ENCODE measurements at regions of chr3 and their contacts with region 1.

Region 1: DNA sequence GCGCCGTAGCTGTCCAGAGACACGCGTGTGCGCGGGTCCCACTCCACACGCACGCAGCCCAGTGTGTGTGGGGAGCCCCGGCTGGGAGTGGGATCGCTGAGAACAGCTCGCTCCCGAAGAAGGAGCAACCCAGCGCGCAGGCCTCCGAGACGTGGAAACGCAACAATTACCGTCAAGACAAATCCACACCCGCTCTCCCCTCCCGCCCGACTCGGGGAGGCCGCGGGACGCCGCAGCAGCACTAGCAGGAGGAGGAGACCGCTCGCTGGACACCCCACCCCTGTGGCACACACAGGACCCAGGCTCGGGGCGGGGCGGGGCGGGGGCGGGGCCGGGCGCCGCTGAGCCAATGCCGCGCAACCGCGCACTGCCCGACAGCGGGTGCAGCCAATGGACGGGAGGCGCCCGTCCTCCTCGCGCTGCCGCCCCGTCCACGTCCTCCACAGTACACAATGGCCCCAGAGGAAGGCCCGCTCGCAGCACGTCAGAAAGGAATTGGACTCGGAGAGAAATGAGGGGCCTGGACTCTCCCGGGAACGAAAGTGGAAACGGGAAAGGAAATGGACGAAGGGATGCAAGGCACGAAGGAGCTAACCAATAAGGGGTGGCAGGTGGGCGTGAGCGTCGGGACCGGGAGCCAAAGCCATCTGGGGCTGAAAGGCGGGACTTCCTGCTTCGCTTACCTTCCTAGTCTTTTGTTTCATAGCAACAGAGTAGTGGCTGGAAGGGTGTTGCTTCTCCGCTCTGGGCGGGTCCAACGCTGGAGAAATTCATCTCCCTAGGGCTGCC is at the start of gene CBLB:
- DNase-seq: peak; percentile 97
- ATAC-seq: peak; percentile 95
- total RNA-seq, gene CBLB: 54.6 TPM

Region 2: DNA sequence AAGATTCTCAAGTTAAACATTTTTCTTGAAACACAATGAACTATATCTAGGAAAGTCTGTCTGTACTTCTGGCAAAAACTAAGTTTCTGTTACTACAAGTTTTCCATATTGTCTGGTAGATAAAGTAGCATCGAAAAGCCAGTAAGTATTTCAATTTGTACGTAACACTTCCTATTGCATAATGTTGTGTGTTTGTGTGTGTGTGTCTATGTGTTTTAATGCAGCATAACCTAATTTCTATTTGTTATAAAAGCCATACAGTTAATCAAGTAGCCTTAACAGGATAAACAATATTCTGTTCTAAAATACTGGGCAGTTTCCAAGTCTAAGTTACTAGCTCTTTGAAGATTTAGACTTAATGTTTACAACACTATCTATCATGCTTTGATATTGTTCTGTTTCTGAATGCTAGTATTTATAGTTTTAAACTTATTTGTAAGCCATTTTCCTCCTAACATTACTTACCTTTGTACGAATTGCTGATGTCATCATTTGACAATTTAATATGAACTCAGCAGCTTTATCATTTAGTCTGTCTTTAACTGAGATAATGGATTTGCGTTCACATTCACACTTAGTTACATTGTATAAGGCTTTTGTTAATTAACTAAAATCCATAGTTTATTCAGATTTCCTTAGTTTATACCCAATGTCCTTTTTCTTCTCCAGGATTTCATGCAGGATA is 164.1 kb before region 1 on chr3:
- intact Hi-C with region 1: loop called (anchors 5 kb)
- DNase-seq: no peak
- ATAC-seq: no peak

Region 3: DNA sequence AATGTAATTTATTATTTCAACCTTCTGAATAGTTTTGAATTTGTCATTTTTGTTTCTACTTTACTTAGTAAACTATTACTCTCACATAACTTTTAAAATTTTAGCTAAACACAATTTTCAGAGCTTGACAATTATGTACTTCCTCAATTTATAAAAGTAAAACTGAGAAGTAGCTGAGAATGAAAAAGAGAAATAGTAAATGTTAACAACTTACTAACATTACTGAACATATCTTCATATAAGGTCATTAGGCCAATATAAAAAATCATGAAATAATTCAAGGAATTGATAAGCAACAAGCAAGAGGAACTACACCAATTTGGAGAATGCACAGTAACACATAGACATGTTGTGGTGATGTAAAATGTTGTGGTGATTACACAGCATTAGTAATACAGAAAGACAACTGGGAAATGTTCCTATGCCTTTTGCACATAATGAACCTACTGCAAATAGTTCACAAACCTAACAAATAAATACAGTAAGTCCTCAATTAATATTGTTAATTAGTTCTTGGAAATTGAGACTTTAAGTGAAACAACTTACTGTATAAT is 138.1 kb before region 1 on chr3:
- intact Hi-C with region 1: no loop called
- DNase-seq: no peak
- ATAC-seq: no peak

Region 4: GRCh38 chr3:105829871-105830622 is 38.9 kb before region 1 on chr3:
- intact Hi-C with region 1: loop called (anchors 5 kb)
- DNase-seq: no peak
- ATAC-seq: no peak

Region 5: GRCh38 chr3:105915524-105915923 is 46.6 kb after region 1 on chr3:
- intact Hi-C with region 1: no loop called
- DNase-seq: no peak
- ATAC-seq: no peak

Region 6: DNA sequence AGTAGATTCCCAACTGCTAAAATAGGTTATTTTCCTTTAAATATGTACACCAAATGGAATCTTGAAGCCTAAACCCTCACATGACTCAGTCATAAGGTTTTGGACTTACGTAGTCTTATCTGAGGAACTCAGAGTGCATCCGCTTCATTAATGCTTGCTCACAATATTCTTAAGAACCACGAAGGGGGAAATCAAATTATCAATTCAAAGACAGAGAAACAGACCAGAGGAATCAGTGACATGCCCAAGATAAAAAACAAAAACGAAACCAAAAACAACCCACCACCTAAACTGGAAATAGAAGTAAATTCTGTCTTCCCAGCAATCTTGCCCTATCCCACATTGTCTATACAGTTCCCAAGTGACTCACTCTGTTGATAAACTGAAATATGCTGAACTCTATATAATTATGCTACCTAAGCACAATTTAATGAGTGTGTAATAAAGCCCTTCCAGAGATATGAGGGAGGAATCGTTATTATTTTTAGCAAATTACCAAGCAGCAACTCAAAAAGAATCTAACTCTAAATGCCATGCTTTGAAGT is 135.3 kb after region 1 on chr3:
- intact Hi-C with region 1: loop called (anchors 5 kb)
- DNase-seq: no peak
- ATAC-seq: peak; percentile 34

Region 7: DNA sequence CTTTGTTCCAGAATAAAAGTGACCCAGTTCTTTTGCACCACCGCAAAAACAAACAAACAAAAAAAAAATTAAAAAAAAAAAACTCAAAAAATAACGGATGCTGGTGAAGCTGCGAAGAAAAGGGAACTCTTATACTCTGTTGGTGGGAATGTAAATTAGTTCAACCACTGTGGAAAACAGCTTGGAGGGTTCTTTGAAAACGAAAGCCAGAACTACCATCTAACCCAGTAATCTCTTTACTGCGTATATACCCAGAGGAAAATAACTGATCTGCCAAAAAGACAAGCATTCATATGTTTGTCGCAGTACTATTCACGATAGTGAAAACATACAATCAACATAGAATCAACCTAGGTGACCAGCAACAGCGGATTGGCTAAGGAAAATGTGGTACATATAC is 298.8 kb after region 1 on chr3:
- intact Hi-C with region 1: no loop called
- DNase-seq: no peak
- ATAC-seq: no peak